ENCODE measurements at regions of chr12 and their contacts with region 1.

Region 1: DNA sequence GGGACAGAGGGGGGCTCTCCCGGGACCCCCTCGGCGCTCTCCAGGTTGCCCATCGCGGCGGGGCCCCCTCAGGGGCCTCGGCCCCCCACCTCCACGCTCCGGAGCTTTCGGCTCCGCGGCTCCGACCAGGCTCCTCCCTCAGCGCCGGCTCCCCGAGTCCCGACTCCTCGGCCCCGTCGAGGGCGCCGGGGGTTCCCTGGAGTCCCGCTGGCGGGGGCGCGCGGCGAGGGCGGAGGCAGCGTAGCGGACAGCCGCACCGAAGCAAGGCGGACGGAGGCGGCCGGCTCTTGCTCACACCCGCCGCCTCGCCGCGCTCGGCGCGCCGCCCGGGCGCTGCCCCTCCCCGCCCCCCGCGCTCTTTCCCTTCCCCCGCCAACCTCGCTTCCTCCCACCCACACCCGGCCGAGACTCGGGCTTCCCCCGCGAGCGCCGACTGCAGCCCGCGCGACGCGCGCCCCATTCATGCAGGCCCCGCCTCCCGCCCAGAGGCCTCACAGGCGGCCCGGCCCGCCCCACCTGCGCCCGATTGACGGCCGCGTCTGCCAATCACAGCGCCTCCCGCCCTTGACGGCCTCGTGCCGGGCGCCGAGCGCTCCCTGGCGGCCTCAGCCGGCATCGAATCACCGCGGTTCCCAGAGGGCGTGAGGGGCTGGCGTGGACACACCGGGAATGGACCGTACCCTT is at the start of gene FMNL3:
- DNase-seq: peak; percentile 97 to 100 (median 98)
- ATAC-seq: peak; percentile 97
- H3K4me3 ChIP-seq: peak within 1 kb of the TSS; percentile 78
- H3K4me3 Mint-ChIP-seq: peak within 1 kb of the TSS; percentile 78 to 96 (median 92)
- H3K27ac ChIP-seq: peak within 1 kb of the TSS; percentile 92
- H3K27ac Mint-ChIP-seq: peak within 1 kb of the TSS; percentile 72 to 94 (median 89)
- H3K4me1 ChIP-seq: peaks cover 11 to 32% of the 10 kb centered on the region in 2 donors
- H3K4me1 Mint-ChIP-seq: peaks cover 38 to 49% (median 46%) of the 10 kb centered on the region in 7 donors
- H3K27me3 ChIP-seq: no peaks in the 10 kb centered on the region
- H3K27me3 Mint-ChIP-seq: peaks cover 0 to 29% (median 0%) of the 10 kb centered on the region in 5 donors
- total RNA-seq, gene FMNL3: 33.3 to 40.4 (median 39.7) TPM

Region 2: DNA sequence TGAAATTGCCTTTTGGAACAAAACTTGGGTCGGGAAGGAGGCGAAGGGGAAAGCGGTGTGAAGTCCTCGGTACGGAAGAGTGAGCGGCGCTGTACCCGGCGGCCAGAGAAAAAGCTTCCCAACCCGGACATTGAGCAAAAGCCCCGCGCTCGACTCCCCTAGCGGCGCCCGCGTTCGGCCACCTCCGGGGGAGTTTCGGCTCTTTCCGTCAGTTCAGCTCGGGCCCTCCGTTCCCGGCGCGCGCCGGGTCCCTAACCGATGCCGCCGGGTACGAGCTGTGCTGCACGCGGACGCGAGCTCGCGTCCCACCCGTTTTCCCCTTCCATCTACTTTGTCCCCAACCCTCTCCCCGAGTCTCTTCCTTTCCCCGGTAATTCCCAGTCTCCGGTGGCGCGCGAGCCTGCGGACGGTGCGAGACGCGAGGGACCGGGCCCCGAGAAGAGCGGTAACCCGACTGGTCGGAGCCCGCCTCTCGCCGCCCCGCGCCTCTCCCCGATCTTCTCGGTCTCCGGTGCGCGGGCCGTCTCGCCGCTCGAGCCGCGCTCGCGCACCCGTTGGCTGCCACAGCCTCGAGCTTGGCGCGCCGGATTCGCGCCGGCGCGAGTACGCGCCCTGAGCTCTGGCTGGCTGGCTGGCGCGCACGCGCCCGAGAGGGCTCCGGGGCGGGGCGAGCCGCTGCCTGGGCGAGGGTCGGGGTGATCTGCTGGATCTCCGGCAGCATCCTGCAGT is 340.5 kb before region 1 on chr12:
- CTCF ChIA-PET with region 1: no interaction called
- POLR2A ChIA-PET with region 1: no interaction called
- intact Hi-C with region 1: loop called in 1 of 2 experiments (anchors 10 kb)
- DNase-seq: peak; percentile 72 to 95 (median 82)
- ATAC-seq: peak; percentile 90
- H3K4me3 ChIP-seq: peak overlapping the region; percentile 90
- H3K4me3 Mint-ChIP-seq: peak overlapping the region; percentile 71 to 97 (median 88)
- H3K27ac ChIP-seq: peak overlapping the region; percentile 87
- H3K27ac Mint-ChIP-seq: peak overlapping the region; percentile 65 to 97 (median 94)
- H3K4me1 ChIP-seq: peaks cover 0 to 15% of the 10 kb centered on the region in 2 donors
- H3K4me1 Mint-ChIP-seq: peaks cover 11 to 39% (median 31%) of the 10 kb centered on the region in 7 donors
- H3K27me3 ChIP-seq: no peaks in the 10 kb centered on the region
- H3K27me3 Mint-ChIP-seq: peaks cover 0 to 2% (median 0%) of the 10 kb centered on the region in 5 donors

Region 3: GRCh38 chr12:49623142-49623904 is 83.9 kb before region 1 on chr12 and contains the start of gene PRPF40B:
- CTCF ChIA-PET with region 1: interaction called, 4 read pairs
- POLR2A ChIA-PET with region 1: interaction called, 4 read pairs
- intact Hi-C with region 1: loop called (anchors 1 kb)
- DNase-seq: peak; percentile 82 to 92 (median 89)
- ATAC-seq: peak; percentile 89
- H3K4me3 ChIP-seq: peak within 1 kb of the TSS; percentile 42
- H3K4me3 Mint-ChIP-seq: peak within 1 kb of the TSS; percentile 86 to 96 (median 91)
- H3K27ac ChIP-seq: peak within 1 kb of the TSS; percentile 66
- H3K27ac Mint-ChIP-seq: peak within 1 kb of the TSS; percentile 81 to 95 (median 91)
- H3K4me1 ChIP-seq: peaks cover 6 to 22% of the 10 kb centered on the region in 2 donors
- H3K4me1 Mint-ChIP-seq: peaks cover 19 to 29% (median 23%) of the 10 kb centered on the region in 7 donors
- H3K27me3 ChIP-seq: no peaks in the 10 kb centered on the region
- H3K27me3 Mint-ChIP-seq: peaks cover 0 to 32% (median 0%) of the 10 kb centered on the region in 5 donors
- total RNA-seq, gene PRPF40B: 7.8 to 24.1 (median 12.1) TPM

Region 4: DNA sequence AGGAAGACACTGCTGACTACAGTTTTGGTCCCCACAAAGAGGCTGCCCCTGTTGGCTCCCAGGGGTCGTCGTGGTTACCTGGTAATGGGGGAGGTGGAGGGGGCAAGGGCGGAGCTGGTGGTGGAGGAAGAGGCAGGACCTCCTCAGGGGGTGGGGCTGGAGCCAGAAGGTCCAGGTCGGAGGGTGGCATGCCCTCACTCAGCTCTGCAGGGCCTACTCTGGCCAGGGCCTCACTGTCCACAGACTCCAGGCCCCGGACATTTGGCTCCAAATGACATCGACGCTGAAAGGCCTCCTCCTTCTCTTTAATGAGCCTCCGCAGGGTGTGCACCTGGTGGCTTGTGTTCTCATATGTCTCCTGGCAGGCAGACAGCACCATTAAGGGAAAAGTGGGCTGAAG is 55.4 kb before region 1 on chr12:
- CTCF ChIA-PET with region 1: interaction called, 229 read pairs
- POLR2A ChIA-PET with region 1: interaction called, 16 read pairs
- intact Hi-C with region 1: no loop called
- DNase-seq: no peak
- ATAC-seq: no peak
- H3K4me3 ChIP-seq: no peak overlapping the region
- H3K4me3 Mint-ChIP-seq: no peak overlapping the region
- H3K27ac ChIP-seq: no peak overlapping the region
- H3K27ac Mint-ChIP-seq: peak overlapping the region in 7 of 9 donors; percentile 27 to 88 (median 62)
- H3K4me1 ChIP-seq: peaks cover 0 to 16% of the 10 kb centered on the region in 2 donors
- H3K4me1 Mint-ChIP-seq: peaks cover 26 to 59% (median 49%) of the 10 kb centered on the region in 7 donors
- H3K27me3 ChIP-seq: no peaks in the 10 kb centered on the region
- H3K27me3 Mint-ChIP-seq: no peaks in the 10 kb centered on the region

Region 5: GRCh38 chr12:49687941-49688340 is 19.3 kb before region 1 on chr12:
- CTCF ChIA-PET with region 1: interaction called, 5 read pairs
- POLR2A ChIA-PET with region 1: interaction called, 40 read pairs
- intact Hi-C with region 1: loop called in 1 of 2 experiments (anchors 1 kb)
- DNase-seq: no peak
- ATAC-seq: no peak
- H3K4me3 ChIP-seq: no peak overlapping the region
- H3K4me3 Mint-ChIP-seq: no peak overlapping the region
- H3K27ac ChIP-seq: no peak overlapping the region
- H3K27ac Mint-ChIP-seq: peak overlapping the region in 5 of 9 donors; percentile 14 to 62 (median 28)
- H3K4me1 ChIP-seq: peaks cover 0 to 3% of the 10 kb centered on the region in 2 donors
- H3K4me1 Mint-ChIP-seq: peaks cover 42 to 80% (median 66%) of the 10 kb centered on the region in 7 donors
- H3K27me3 ChIP-seq: no peaks in the 10 kb centered on the region
- H3K27me3 Mint-ChIP-seq: no peaks in the 10 kb centered on the region

Region 6: GRCh38 chr12:50025187-50026059 is 318.2 kb after region 1 on chr12 and contains the start of gene RACGAP1:
- CTCF ChIA-PET with region 1: no interaction called
- POLR2A ChIA-PET with region 1: no interaction called
- intact Hi-C with region 1: loop called in 1 of 2 experiments (anchors 1 kb)
- DNase-seq: peak; percentile 77 to 98 (median 97)
- ATAC-seq: peak; percentile 99
- H3K4me3 ChIP-seq: peak within 1 kb of the TSS; percentile 81
- H3K4me3 Mint-ChIP-seq: peak within 1 kb of the TSS; percentile 90 to 99 (median 96)
- H3K27ac ChIP-seq: peak within 1 kb of the TSS; percentile 73
- H3K27ac Mint-ChIP-seq: peak within 1 kb of the TSS; percentile 38 to 97 (median 90)
- H3K4me1 ChIP-seq: peaks cover 0 to 12% of the 10 kb centered on the region in 2 donors
- H3K4me1 Mint-ChIP-seq: peaks cover 10 to 43% (median 18%) of the 10 kb centered on the region in 7 donors
- H3K27me3 ChIP-seq: no peaks in the 10 kb centered on the region
- H3K27me3 Mint-ChIP-seq: peaks cover 0 to 3% (median 0%) of the 10 kb centered on the region in 5 donors
- total RNA-seq, gene RACGAP1: 4.2 to 111 (median 8.0) TPM

Measured in naive thymus-derived CD4-positive, alpha-beta T cell (primary cell).